ENCODE measurements at regions of chr2 and their contacts with region 1.

Region 1: GRCh38 chr2:223779877-223780276 is 57.5 kb downstream of the AP1S3 start:
- DNase-seq: peak; percentile 67
- CTCF ChIP-seq: peak; percentile 50

Region 2: DNA sequence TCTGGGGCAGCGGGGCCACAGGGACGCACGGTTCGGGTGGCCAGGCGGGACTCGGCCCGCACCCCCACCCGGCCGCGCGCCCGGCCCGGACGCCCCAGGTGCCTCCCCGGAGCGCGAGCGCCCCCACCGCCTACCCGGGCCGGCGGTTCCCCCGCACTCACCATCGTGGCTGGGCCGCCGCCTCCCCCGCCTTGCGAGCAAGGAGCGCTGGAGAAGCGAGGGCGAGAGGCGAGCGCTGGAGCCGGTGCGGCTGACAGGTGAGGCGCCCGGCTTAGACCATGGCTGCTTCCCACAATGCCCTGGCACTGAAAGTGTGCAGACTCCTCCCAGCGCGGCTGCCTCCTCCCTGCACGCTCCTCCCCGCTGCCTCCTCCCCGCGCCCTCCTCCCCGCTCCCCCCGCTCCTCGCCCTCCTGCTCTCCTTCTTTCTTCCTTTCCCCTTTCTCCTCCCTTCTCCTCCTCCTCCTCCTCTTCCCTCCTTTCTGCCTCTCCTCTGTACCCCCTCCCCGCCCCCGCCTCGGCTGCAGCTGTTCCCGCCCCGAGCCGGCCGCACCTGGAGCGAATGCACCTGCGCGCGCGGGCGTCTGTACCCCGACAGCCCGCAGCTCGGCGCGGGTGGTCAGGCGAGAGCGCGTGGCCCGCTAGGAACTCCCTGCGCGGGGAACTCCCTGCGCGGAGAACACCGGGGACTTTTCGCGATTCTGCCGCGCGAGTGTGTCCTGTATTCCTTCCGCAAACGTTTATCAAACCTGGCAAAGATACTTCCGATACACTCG is 57.6 kb after region 1 on chr2 and contains the start of gene AP1S3:
- in situ Hi-C with region 1: loop called (anchors 10 kb)
- DNase-seq: peak; percentile 94
- CTCF ChIP-seq: peak; percentile 44

Region 3: GRCh38 chr2:223896833-223897311 is 117.0 kb after region 1 on chr2:
- in situ Hi-C with region 1: no loop called
- DNase-seq: peak; percentile 51
- CTCF ChIP-seq: no peak

Region 4: GRCh38 chr2:223930103-223930976 is 150.5 kb after region 1 on chr2:
- in situ Hi-C with region 1: no loop called
- DNase-seq: no peak
- CTCF ChIP-seq: no peak

Region 5: DNA sequence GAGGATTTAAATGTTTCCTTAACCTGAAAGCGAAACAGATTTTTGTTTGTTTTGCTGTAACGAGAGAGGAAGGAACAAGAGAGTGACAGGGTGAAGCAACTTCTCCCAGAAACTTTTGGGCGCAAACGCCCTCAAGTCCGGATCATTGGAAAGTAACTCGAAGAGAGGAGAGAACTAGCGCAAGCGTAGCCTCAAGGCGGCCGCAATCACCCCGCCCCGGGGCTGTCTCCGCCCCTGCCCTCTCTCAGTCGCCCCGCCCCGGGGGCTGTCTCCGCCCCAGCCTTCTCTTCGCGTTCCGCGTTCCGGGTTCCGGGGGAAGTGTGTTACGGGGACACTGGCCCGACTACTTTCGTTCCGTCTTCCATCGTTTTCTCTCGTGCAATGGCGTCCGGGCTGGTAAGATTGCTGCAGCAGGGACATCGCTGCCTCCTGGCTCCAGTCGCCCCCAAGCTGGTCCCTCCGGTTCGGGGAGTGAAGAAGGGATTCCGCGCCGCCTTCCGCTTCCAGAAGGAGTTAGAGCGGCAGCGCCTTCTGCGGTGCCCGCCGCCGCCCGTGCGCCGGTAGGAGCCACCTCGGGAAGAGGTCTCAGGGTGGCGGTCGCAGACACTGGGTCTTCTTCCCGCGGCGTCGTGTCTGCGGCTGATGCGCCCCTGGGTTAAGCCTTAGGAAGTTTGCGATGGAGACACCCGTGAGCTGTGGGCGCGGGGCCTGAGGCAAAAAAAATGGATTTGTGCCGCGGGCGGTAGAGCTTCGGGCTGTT is 177.4 kb after region 1 on chr2 and contains the start of gene MRPL44:
- in situ Hi-C with region 1: loop called (anchors 10 kb)
- DNase-seq: peak; percentile 90
- CTCF ChIP-seq: no peak

Region 6: GRCh38 chr2:224284134-224284946 is 504.5 kb after region 1 on chr2:
- in situ Hi-C with region 1: no loop called
- DNase-seq: no peak
- CTCF ChIP-seq: peak; percentile 34

Measured in GM13977 (cell line).